ENCODE measurements at regions of chr4 and their contacts with region 1.

Region 1: GRCh38 chr4:77959566-77960338 is 97.1 kb downstream of the MRPL1 start:
- DNase-seq: no peak
- ATAC-seq: no peak

Region 2: DNA sequence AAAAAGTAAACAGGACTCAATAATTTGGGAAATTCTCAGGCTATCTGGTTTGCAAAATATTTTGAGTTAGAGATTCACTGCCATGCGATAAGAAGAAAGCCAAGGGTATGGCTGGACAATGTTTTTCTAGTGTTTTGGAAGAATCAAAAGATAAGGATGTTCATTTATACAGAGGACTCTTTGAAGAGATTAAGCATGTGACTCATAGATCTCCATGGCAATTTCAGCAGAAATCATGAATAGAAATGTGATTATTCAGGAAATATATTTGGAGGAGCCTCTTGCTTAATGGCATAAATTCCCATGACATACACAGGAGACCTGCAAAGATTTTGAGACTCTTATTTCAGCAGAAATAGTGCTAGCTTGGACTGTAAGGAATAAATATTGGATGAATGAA is 80.7 kb after region 1 on chr4:
- intact Hi-C with region 1: no loop called
- DNase-seq: no peak
- ATAC-seq: no peak

Region 3: GRCh38 chr4:78517050-78517652 is 557.4 kb after region 1 on chr4:
- intact Hi-C with region 1: loop called (anchors 5 kb)
- DNase-seq: no peak
- ATAC-seq: no peak

Region 4: DNA sequence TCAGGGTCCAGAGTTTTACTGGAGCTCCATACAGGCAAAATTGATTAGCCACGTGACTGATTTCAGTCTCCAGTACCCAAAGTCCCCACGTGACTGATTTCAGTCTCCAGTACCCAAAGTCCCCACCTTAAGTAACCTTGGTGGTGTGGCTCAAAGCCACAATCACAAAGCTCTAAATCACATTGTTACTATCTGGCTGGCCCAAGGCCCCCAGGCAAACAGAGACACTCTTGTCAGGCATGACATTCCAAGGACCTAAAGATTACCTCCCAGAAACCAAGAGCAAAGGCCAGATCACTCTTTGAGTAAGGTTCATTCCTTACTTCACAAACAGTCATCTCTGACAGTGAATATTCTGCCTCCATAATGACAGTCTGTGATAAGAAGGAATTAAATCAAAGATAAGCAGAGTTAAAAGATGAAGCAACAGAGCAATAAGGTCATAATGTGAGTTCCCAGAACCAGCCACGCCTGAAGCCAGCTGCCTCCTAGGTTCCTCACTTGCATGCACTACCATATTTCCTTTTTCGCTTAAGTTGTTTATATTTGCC is 670.3 kb after region 1 on chr4:
- intact Hi-C with region 1: no loop called
- DNase-seq: peak; percentile 42
- ATAC-seq: peak; percentile 35

Measured in left ventricle myocardium superior (tissue), 1 donor.